ENCODE measurements at regions of chr6 and their contacts with region 1.

Region 1: GRCh38 chr6:126361832-126362412 is 22.0 kb downstream of the CENPW start:
- DNase-seq: no peak
- ATAC-seq: peak; percentile 16; the same call in 2 of the 3 replicates
- H3K4me3 ChIP-seq: no peak overlapping the region
- H3K27ac ChIP-seq: no peak overlapping the region
- H3K4me1 ChIP-seq: no peaks in the 10 kb centered on the region
- H3K27me3 ChIP-seq: no peaks in the 10 kb centered on the region
- CTCF ChIP-seq: no peak
- EP300 ChIP-seq: no peak
- POLR2A ChIP-seq: no peak
- RAD21 ChIP-seq: no peak

Region 2: DNA sequence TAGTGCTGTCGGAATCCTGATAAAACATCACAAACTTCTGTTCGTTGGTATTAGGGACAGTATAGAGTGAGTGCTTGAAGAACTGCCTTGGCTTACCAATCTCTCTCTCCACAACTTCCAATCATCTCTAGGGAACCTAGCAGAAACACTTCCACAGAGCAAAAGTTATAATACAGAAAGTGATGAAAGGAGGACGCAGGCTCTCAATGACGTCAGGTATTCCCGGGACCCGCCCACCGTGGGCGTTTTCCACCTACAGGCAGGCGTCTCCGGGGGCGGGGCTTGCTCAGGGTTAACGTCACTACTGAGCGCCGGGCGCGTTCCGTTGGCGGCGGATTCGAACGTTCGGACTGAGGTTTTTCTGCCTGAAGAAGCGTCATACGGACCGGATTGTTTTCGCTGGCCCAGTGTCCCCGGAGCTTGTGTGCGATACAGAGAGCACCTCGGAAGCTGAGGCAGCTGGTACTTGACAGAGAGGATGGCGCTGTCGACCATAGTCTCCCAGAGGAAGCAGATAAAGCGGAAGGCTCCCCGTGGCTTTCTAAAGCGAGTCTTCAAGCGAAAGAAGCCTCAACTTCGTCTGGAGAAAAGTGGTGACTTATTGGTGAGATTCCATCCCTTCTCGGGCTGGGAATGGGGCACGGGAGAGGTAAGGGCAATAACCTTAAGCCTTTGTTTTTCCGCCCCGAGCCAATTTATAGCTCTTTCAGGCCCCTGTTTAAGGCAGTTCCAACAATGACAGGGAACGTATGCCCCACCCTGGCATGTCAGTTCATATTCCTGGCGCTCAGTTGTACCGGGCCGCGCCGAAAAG is 21.9 kb before region 1 on chr6 and contains the start of gene CENPW:
- CTCF ChIA-PET with region 1: interaction called, 22 read pairs
- POLR2A ChIA-PET with region 1: no interaction called
- RAD21 ChIA-PET with region 1: interaction called, 3 read pairs
- SMC1A ChIA-PET with region 1: interaction called, 4 read pairs
- in situ Hi-C with region 1: no loop called
- intact Hi-C with region 1: no loop called
- DNase-seq: peak; percentile 48
- ATAC-seq: peak; percentile 85
- H3K4me3 ChIP-seq: peak within 1 kb of the TSS; percentile 90
- H3K27ac ChIP-seq: peak within 1 kb of the TSS; percentile 66
- H3K4me1 ChIP-seq: peaks cover 8% of the 10 kb centered on the region
- H3K27me3 ChIP-seq: no peaks in the 10 kb centered on the region
- CTCF ChIP-seq: no peak
- EP300 ChIP-seq: no peak
- POLR2A ChIP-seq: peak; percentile 83
- RAD21 ChIP-seq: no peak
- polyA plus RNA-seq, gene CENPW: 237 to 283 TPM

Region 3: DNA sequence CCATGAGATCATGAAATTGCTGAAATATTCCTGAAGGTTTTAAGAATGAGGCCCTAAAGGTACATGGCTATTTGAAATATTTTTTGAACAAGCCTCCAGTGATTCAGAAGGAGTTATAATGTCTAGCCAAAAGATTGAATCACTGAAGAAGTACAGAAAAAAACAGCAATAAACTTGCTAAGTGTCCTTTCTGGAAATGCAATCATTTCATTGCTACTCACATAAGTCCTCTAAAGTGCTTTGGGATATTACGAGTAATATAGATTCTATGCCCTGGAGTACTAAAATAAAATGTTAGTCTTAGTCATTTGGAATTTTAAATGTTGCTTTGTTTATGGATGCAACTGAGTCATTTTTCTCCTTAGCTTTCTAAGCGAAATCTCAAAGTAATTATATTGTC is 10.7 kb after region 1 on chr6:
- CTCF ChIA-PET with region 1: interaction called, 32 read pairs
- POLR2A ChIA-PET with region 1: no interaction called
- RAD21 ChIA-PET with region 1: no interaction called
- SMC1A ChIA-PET with region 1: interaction called, 3 read pairs
- in situ Hi-C with region 1: no loop called
- intact Hi-C with region 1: no loop called
- DNase-seq: no peak
- ATAC-seq: no peak
- H3K4me3 ChIP-seq: no peak overlapping the region
- H3K27ac ChIP-seq: no peak overlapping the region
- H3K4me1 ChIP-seq: no peaks in the 10 kb centered on the region
- H3K27me3 ChIP-seq: no peaks in the 10 kb centered on the region
- CTCF ChIP-seq: no peak
- EP300 ChIP-seq: no peak
- POLR2A ChIP-seq: no peak
- RAD21 ChIP-seq: no peak

Region 4: DNA sequence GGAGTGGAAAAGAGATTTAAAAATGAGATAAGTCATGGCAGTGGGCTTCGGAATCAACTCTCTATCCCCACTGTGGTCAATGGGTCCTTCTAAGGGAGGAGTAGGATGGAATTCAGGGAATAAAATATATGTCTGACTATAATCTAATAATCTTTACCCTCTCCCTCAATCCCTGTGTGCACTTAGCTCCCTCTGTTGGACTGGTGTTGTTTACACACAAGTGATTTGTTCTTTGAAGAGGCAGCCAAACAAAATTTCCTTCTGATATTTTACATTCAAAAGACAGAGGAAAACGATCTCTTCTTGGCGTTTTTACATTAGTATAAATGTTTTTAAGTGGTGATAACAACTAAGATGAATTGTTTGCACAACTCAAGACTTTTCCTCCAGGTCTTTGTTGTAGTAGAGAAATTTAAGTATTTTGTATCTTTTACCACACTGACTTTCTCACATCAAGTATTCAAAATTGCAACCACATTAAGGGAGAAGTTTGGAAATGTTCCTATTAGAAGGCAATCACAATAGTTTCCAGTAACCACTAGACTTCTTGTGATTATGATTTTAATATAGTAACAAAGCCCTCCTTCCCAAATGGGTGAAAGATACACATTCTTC is 295.7 kb after region 1 on chr6:
- CTCF ChIA-PET with region 1: interaction called, 26 read pairs
- POLR2A ChIA-PET with region 1: no interaction called
- RAD21 ChIA-PET with region 1: interaction called, 3 read pairs
- SMC1A ChIA-PET with region 1: interaction called, 6 read pairs
- in situ Hi-C with region 1: no loop called
- intact Hi-C with region 1: loop called (anchors 5 kb)
- DNase-seq: no peak
- ATAC-seq: peak; percentile 40; the same call in 1 of the 3 replicates
- H3K4me3 ChIP-seq: no peak overlapping the region
- H3K27ac ChIP-seq: no peak overlapping the region
- H3K4me1 ChIP-seq: no peaks in the 10 kb centered on the region
- H3K27me3 ChIP-seq: no peaks in the 10 kb centered on the region
- CTCF ChIP-seq: peak; percentile 38 to 55 (median 46); a peak in 4 of 6 replicates
- EP300 ChIP-seq: no peak
- POLR2A ChIP-seq: no peak
- RAD21 ChIP-seq: peak; percentile 66

Region 5: DNA sequence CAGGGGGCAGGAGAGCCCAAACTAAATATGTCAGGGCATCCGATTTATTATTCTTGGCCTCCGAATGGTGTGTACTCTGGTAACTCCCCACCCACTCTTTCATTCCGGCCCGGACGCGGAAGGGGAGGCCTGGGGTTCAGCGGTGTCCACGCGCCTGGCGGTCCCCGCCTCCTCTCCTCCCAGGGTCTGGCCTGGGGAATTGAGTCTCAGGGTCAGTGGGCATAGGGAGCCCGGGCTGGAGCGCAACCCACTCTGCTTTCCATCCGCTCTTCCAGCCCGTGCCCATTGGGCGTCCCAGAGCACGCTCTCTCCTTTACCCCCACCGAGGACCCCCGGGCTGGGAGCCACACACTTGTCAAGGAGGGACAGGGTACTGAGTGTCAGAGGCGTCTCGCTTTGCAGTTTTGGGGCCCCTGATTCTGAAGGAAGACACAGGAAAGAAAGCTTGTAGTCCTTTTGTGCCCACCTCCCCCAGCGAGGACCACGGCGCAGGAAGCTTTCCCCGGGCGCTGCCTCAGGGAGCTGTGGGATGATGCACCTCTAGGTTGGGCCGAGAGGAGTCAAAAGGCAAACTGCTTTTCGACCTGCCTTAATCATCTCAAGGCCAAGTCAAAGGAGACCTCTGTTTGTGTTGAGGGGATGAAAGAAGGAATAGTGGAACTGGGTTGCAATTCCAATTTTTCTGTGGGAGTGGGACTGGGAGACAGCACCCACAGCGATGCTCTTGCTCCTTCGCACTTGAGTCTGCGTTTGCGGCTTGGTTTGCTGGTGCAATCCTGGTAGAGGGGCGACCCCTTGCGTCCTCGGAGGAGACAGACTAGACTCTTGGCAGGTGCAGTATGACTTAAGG is 759.1 kb after region 1 on chr6:
- CTCF ChIA-PET with region 1: no interaction called
- POLR2A ChIA-PET with region 1: no interaction called
- RAD21 ChIA-PET with region 1: no interaction called
- SMC1A ChIA-PET with region 1: no interaction called
- in situ Hi-C with region 1: no loop called
- intact Hi-C with region 1: loop called (anchors 1 kb)
- DNase-seq: peak; percentile 24
- ATAC-seq: peak; percentile 90
- H3K4me3 ChIP-seq: no peak overlapping the region
- H3K27ac ChIP-seq: no peak overlapping the region
- H3K4me1 ChIP-seq: peaks cover 5% of the 10 kb centered on the region
- H3K27me3 ChIP-seq: peaks cover 9 to 24% of the 10 kb centered on the region in 2 experiments
- CTCF ChIP-seq: peak; percentile 81 to 96 (median 85)
- EP300 ChIP-seq: no peak
- POLR2A ChIP-seq: no peak
- RAD21 ChIP-seq: peak; percentile 97